T-cell (primary cell): ENCODE measurements at regions of chrX and their contacts with region 1.

Region 1: DNA sequence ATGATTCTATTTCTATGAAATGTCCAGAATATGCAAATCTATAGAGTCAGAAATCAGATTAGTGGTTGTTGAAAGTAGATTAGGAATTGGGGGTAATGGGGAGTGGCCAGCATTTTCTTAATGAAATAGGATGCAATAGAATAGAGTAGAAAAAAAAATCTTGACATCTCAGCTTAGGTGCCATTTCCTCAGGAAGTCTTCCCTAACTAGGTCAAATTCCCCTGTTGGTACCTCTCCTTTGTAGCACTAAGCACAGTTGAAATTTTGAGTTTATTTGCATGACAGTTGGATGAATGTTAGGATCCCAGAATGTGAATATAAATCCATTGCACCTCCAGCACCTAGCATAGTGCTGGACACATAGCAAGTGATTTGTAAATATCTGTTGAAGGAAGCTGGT is 30.0 kb upstream of the PDK3 start:
- DNase-seq: peak in 1 of 35 experiments; percentile 1
- ATAC-seq: no peak
- H3K4me3 ChIP-seq: no peak overlapping the region
- H3K4me3 Mint-ChIP-seq: no peak overlapping the region
- H3K27ac ChIP-seq: no peak overlapping the region
- H3K27ac Mint-ChIP-seq: no peak overlapping the region
- H3K4me1 ChIP-seq: no peaks in the 10 kb centered on the region
- H3K4me1 Mint-ChIP-seq: peaks cover 8 to 18% (median 11%) of the 10 kb centered on the region in 3 donors
- H3K27me3 ChIP-seq: no peaks in the 10 kb centered on the region
- H3K27me3 Mint-ChIP-seq: peaks cover 0 to 26% of the 10 kb centered on the region in 2 donors

Region 2: DNA sequence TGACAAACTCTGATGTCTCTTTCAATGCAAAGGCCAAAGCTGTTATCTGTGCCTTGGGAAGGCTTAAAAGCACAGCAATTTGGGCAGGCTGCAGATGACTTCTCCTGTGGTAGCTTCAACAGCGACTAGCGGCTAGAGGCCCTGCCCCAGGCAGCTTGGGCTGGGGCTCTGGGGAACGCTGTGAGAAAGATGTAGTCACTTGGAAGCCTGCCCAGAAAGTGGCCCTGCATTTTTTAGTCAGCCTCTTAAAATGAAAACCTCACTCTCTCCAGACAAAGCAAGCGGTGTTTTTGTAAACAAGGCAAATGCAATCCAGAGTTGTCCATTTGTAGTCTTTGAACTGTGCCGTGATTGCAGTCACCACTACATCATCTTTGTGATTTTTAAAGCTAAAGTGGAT is 184.6 kb after region 1 on chrX:
- CTCF ChIA-PET with region 1: interaction called in 1 of 2 experiments, 12 read pairs
- POLR2A ChIA-PET with region 1: no interaction called
- DNase-seq: no peak
- ATAC-seq: no peak
- H3K4me3 ChIP-seq: no peak overlapping the region
- H3K4me3 Mint-ChIP-seq: no peak overlapping the region
- H3K27ac ChIP-seq: no peak overlapping the region
- H3K27ac Mint-ChIP-seq: no peak overlapping the region
- H3K4me1 ChIP-seq: no peaks in the 10 kb centered on the region
- H3K4me1 Mint-ChIP-seq: no peaks in the 10 kb centered on the region
- H3K27me3 ChIP-seq: no peaks in the 10 kb centered on the region
- H3K27me3 Mint-ChIP-seq: peaks cover 4 to 12% of the 10 kb centered on the region in 2 donors

Region 3: GRCh38 chrX:24672701-24673190 is 237.7 kb after region 1 on chrX:
- CTCF ChIA-PET with region 1: no interaction called
- POLR2A ChIA-PET with region 1: interaction called in 1 of 2 experiments, 10 read pairs
- DNase-seq: no peak
- ATAC-seq: no peak
- H3K4me3 ChIP-seq: no peak overlapping the region
- H3K4me3 Mint-ChIP-seq: no peak overlapping the region
- H3K27ac ChIP-seq: no peak overlapping the region
- H3K27ac Mint-ChIP-seq: no peak overlapping the region
- H3K4me1 ChIP-seq: peaks cover 0 to 2% of the 10 kb centered on the region in 2 experiments
- H3K4me1 Mint-ChIP-seq: peaks cover 0 to 2% (median 0%) of the 10 kb centered on the region in 3 donors
- H3K27me3 ChIP-seq: no peaks in the 10 kb centered on the region
- H3K27me3 Mint-ChIP-seq: peaks cover 0 to 14% of the 10 kb centered on the region in 2 donors